Thyroid gland (tissue), 4 donors: ENCODE measurements at regions of chr15 and their contacts with region 1.

Region 1: DNA sequence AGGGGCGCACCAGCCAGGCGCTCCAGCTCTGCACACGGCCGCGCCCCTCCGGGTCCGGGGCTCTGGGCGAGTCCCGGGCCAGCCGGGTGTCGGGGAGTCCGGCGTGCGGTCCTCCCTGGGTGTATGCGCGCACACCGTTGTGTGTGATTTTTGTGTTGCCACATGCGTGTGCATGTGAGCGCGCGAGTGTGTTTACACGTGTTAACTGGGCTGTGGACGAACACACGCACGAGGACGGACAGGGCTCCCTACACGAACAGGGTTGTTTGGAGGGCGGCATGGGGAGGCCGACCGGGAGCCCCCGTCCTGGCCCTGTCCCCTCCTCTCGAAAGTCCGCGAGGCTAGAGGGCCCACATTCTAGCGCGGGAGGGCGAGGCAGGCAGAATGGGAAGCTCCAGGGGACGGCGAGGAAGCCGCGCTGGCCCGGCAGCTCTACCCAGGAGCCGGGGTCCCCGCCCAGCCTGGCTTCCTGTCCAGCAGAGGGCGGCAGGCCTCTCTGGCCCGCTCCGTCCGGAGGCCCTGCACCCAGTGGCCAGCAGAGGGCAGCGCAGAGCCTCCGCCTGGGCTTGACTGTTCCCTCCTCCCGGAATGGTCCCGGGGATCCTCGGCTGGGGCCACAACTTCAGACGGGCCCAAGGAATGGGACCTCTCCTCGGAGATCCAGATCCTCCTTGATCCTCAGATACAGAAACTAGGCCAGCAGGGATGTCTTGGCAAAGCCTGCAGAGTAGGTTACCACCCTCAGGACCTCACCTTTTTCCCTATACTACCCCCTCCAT is 611 bp upstream of the LINGO1 start:
- DNase-seq: peak; percentile 86 to 90
- H3K4me3 ChIP-seq: peak overlapping the region in 2 of 3 donors; percentile 5 to 50
- H3K27ac ChIP-seq: no peak overlapping the region
- H3K4me1 ChIP-seq: peaks cover 0 to 26% of the 10 kb centered on the region in 2 donors
- H3K27me3 ChIP-seq: peaks cover 5% of the 10 kb centered on the region
- CTCF ChIP-seq: peak; percentile 97 to 100 (median 99)
- POLR2A ChIP-seq: no peak

Region 2: DNA sequence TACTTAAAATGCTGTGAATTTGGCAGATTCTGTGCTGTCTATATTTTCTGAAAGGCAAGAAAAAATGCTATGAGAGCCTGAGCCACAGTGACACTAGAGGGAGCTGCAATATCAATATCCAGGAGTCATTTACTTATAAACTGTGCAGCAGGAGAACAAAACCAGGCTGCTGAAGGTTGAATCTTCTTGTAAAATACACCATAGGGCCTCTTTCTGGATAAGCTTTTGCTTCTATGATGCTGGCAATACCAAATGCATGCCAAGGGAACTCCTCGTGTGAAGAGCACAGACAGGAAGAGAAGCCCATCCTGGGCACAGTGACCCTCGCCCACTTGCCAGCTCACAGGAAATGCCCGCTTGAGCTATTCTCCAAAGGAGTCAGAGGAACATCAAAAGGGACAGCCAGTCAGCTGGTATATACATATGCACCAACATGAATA is 514.4 kb before region 1 on chr15:
- intact Hi-C with region 1: loop called (anchors 5 kb)
- DNase-seq: peak; percentile 42 to 52
- H3K4me3 ChIP-seq: no peak overlapping the region
- H3K27ac ChIP-seq: no peak overlapping the region
- H3K4me1 ChIP-seq: peaks cover 5 to 6% of the 10 kb centered on the region in 2 donors
- H3K27me3 ChIP-seq: no peaks in the 10 kb centered on the region
- CTCF ChIP-seq: peak; percentile 34 to 81 (median 61)
- POLR2A ChIP-seq: no peak

Region 3: DNA sequence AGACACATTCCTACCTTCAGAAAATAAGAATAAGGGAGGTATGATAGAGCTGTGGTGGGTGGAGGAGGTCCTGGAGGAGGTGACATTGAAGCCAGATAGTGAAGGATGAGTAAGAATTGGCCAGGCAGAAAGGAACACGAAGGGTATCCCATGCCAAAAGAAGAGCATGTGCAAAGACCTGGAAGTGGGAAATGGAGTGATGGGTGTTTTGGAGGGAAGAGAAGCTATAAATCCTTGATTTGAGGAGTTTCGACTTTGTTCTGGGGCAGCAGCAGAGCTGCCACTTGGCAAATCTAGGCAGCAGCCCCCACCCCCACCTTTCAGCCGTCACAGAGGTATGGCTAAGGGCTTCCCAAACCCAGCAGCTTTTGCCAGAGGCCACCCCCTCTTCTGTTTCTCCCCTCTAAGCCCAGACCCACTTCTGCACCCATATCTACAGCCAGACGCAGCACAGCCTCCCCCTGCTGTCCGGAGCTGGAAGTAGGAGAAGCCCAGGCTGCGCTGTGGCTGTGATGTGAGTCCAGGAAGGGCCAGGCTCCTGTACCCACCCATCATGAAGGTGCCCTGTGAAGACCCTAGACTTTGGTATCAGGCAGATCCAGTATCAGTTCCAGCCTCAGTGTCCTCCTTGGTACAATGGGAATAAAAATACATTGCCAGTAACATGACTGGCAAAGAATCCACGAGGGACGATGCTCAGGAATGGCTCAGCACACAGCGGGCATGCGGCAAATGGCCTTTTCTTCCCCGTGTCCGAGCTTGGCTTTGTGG is 188.1 kb after region 1 on chr15:
- intact Hi-C with region 1: loop called (anchors 5 kb)
- DNase-seq: peak; percentile 51 to 62
- H3K4me3 ChIP-seq: no peak overlapping the region
- H3K27ac ChIP-seq: no peak overlapping the region
- H3K4me1 ChIP-seq: peaks cover 3 to 30% of the 10 kb centered on the region in 2 donors
- H3K27me3 ChIP-seq: peaks cover 16% of the 10 kb centered on the region
- CTCF ChIP-seq: peak; percentile 22 to 70 (median 50)
- POLR2A ChIP-seq: no peak

Region 4: DNA sequence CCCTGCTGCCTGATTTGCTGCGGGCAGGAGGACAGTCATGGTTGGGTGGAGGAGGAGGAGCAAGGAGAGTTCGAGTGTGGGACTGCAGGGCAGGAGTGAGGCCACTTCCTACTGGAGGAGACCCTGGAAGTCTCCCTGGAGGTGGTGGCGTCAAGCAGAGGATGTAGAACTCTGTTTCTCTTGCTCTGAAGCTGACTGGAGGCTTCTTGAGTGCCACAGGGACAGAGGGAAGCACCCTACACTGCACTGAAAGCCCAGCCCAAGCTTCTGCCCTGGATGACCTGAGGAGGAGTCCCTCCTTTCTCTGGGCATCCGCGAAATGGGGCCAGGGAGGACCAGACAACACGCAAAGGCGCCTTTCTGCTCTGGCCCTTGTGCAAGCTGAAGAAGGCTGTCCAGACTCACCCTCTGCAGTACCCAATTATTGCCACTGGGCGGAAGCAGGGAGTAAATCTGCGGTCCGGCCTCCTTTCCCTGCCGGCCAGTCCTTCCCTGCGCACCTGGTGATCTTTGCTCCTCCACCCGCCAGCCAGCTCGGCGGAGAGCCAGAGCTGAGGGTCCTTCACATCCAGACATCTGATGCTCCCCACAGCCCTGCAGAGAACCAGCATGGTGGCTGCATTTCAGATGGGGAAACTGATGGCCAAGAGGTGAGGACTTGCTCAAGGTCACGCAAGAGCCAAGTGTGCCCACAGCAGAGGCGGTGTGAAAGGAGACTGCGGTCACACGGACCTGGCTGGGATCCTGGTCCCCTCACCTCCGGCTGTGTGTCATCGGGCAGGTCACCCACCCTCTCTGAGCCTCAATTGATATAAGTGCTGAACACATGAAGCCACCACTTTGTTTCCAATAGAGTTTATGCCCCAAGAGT is 237.1 kb after region 1 on chr15:
- intact Hi-C with region 1: loop called (anchors 5 kb)
- DNase-seq: peak; percentile 70 to 71
- H3K4me3 ChIP-seq: no peak overlapping the region
- H3K27ac ChIP-seq: no peak overlapping the region
- H3K4me1 ChIP-seq: peaks cover 0 to 13% of the 10 kb centered on the region in 2 donors
- H3K27me3 ChIP-seq: no peaks in the 10 kb centered on the region
- CTCF ChIP-seq: peak; percentile 80 to 93 (median 85)
- POLR2A ChIP-seq: no peak